ENCODE measurements at regions of chr19 and their contacts with region 1.

Region 1: DNA sequence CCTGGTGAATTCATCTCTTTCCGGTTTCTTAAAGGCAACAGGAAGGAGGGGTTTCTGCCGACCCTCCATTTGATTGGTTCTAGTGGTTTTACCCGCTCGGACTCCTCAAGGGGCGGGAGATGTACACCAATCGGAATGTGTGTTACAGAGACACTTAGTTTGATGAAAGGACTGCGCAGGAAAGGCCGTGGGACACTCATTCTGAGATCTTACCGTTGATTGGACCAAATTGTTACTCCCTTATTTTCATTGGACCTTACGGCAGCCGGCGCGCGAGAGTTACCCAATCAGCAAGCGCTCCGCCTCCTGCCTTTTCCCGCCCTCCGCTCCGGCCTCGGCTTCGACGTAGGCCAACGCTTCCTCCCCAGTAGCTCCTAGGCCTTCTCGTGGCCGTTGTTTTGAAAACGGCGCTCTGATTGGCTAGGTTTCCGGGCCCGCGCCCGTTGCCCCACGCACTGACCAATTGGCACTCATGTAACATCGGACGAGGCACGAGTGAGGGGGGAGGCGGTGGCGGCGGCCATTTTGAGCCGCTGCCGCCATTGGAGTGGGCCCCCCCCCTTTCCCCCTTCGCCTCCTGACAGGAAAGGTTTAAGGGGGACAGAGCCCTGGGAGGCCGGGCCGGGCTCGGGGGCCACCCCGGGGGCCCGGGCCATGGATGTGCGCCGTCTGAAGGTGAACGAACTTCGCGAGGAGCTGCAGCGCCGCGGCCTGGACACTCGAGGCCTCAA is at the start of gene HNRNPUL1:
- DNase-seq: peak; percentile 97 to 100
- ATAC-seq: peak; percentile 81 to 92 (median 89)
- H3K4me3 ChIP-seq: peak within 1 kb of the TSS; percentile 45 to 99 (median 91)
- H3K27ac ChIP-seq: peak within 1 kb of the TSS; percentile 92 to 100 (median 99)
- H3K4me1 ChIP-seq: peaks cover 15 to 38% (median 25%) of the 10 kb centered on the region in 9 donors
- H3K27me3 ChIP-seq: no peaks in the 10 kb centered on the region
- CTCF ChIP-seq: peak in 6 of 9 donors; percentile 12 to 58 (median 38)
- total RNA-seq, gene HNRNPUL1: 101 to 151 (median 108) TPM

Region 2: GRCh38 chr19:40974633-40975037 is 289.4 kb before region 1 on chr19:
- intact Hi-C with region 1: loop called in 1 of 10 experiments (anchors 10 kb)
- DNase-seq: peak; percentile 39 to 54
- ATAC-seq: peak in 3 of 8 donors; percentile 51 to 75 (median 66)
- H3K4me3 ChIP-seq: no peak overlapping the region
- H3K27ac ChIP-seq: no peak overlapping the region
- H3K4me1 ChIP-seq: no peaks in the 10 kb centered on the region
- H3K27me3 ChIP-seq: peaks cover 0 to 46% (median 13%) of the 10 kb centered on the region in 7 donors
- CTCF ChIP-seq: peak; percentile 65 to 91 (median 83)

Region 3: DNA sequence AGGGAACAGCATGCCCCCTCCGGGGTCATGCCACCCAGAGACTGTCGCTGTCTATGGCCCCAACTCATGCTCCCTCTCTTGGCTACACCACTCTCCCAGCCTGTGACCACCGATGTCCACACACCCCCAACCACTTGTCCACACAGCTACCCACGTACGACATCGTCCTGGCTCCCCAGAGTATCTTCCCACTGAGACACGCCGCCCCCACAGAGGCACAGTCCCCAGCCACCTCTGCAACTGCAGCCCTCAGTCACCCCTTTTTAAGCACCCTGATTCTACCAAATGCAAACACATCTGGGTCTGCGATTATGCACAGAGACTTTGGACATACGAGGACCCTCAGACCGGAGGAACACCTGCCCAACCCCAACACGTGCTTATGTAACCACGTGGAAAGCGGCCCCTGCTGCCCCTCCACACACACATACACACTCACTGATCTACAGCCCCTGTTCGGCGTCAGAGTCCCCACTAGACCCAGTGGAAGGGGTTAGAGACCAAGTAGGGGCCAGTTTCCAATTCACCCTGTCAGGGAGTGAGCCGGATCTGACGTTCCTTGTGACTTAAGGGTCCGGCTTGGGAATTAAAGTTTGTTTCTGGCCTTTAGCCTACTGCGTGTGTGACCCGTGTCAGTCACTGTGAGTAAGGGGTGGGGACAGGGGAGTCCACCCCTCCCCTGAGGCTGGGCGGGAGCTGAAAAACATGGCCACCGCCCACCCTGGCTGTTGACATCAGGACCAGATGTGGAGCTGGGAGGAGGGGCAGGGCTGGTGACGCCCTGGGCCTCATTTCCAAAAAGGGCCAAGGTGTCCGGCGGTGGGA is 56.9 kb before region 1 on chr19:
- intact Hi-C with region 1: loop called in 9 of 10 experiments (anchors 1 to 5 kb)
- DNase-seq: peak; percentile 84
- ATAC-seq: peak; percentile 75 to 92 (median 90)
- H3K4me3 ChIP-seq: peak overlapping the region in 5 of 10 donors; percentile 5 to 27 (median 19)
- H3K27ac ChIP-seq: peak overlapping the region; percentile 51 to 76 (median 70)
- H3K4me1 ChIP-seq: peaks cover 0 to 19% (median 0%) of the 10 kb centered on the region in 9 donors
- H3K27me3 ChIP-seq: no peaks in the 10 kb centered on the region
- CTCF ChIP-seq: no peak

Region 4: DNA sequence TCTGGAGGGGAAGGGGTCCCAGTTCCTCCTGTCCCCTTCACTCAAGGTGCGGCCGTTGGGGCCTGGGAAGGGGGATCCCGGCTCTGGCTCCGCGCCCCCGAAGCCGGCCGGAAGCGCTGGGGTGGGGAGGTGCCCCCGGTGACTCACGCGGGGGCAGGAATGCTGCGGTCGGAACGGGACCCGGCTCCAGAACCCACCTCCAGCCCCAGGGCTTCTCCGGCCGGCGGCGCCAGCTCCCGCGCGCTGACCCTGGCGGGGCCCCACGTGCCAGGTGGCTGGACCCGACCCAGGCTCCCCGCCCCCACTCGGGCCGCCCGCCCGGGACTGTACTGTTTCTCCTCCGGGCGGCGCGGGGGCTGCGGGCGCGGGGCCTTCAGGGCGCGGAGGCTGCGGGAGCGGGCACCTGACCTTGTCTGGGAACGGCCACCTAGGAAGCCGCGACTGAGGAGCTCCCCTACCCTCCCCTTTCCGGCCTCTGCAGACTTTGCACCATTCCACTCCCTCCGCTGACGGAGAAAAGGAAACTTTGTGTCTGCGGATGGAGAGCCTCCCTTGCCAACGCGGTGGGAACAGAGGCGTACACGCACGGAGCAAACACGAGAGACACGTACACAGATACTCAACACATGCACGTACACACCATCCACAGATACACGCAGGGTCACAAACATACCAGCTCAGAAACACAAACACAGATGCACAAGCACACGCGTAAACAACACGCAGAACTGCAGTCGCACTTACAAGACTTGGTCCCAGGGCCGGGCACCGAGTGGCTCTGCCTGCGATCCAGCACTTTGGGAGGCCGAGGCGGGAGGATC is 37.8 kb before region 1 on chr19:
- intact Hi-C with region 1: loop called in 3 of 10 experiments (anchors 5 kb)
- DNase-seq: peak; percentile 61 to 76
- ATAC-seq: peak; percentile 50 to 89 (median 74)
- H3K4me3 ChIP-seq: peak overlapping the region; percentile 27 to 61 (median 52)
- H3K27ac ChIP-seq: peak overlapping the region; percentile 61 to 87 (median 78)
- H3K4me1 ChIP-seq: peaks cover 5 to 26% (median 15%) of the 10 kb centered on the region in 9 donors
- H3K27me3 ChIP-seq: peaks cover 0 to 39% (median 0%) of the 10 kb centered on the region in 7 donors
- CTCF ChIP-seq: no peak

Region 5: DNA sequence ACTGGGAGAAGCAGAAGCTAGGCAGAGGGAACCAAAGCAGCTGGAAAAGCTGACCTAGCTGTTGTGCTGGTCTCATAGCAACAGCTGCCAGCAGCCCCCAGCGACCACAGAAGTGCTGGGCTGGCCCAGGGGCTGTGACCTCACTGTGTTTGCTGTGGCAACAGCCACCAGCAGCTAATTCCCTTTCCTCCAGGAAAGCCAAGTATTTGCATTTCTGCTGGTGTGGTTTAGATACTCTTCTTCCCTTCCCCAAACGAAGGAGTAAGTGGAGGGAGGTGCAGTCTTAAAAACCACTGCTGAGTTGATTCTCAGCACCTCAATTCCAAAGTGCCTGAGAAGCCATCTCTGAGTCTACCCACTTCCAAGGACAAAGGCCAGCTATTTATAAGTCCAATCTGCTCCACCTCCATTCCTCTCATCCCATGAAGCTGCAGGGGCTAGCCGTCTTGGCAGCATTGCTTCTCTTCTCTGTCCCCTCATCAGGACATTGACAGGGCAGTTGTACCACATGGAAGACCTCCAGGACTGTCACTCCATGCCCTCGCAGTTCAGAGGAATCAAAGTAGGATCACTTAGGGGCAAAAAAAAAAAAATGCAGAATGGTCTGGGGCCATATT is 34.4 kb after region 1 on chr19:
- intact Hi-C with region 1: loop called in 4 of 10 experiments (anchors 1 to 5 kb)
- DNase-seq: peak; percentile 81 to 88
- ATAC-seq: peak; percentile 77 to 90 (median 86)
- H3K4me3 ChIP-seq: no peak overlapping the region
- H3K27ac ChIP-seq: peak overlapping the region; percentile 80 to 93 (median 89)
- H3K4me1 ChIP-seq: peaks cover 16 to 78% (median 58%) of the 10 kb centered on the region in 9 donors
- H3K27me3 ChIP-seq: no peaks in the 10 kb centered on the region
- CTCF ChIP-seq: no peak

Region 6: DNA sequence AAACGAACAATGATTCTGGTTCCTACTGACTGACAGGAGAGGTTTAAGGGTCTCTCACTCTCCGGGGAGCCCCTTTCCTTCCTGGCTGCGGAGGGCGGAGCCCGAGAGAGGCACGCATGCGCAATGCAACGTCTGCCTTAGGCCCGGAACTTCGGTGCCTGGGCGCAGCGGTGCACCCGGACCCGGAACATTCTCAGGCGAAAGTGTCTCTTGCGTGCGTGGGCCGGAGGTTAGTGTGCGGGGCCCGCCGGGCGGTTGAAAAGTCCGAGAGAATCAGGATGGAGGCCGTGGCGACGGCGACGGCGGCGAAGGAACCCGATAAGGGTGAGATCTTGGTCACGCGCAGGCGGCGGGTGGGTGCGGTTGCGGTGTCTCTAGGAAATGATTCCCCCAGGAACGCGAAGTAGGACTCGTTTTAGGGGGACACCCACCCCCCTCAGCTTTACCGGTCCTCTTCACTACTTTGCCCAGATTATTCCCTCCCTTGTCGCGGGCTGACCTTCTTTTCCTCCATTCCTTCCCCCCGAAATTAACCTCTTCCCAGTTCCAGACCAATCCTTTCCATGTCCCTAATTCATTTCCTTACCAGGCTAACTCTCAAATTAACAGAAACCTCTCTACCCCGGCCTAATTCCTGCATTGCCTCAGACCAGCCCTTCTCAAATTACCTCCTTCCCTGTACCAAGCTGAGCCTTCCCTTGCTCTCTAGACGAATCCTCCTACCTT is 46.2 kb after region 1 on chr19 and contains the start of gene CCDC97:
- intact Hi-C with region 1: loop called in 7 of 10 experiments (anchors 1 to 5 kb)
- DNase-seq: peak; percentile 88 to 89
- ATAC-seq: peak; percentile 82 to 93 (median 87)
- H3K4me3 ChIP-seq: peak within 1 kb of the TSS; percentile 15 to 84 (median 70)
- H3K27ac ChIP-seq: peak within 1 kb of the TSS; percentile 89 to 99 (median 94)
- H3K4me1 ChIP-seq: peaks cover 6 to 64% (median 39%) of the 10 kb centered on the region in 9 donors
- H3K27me3 ChIP-seq: no peaks in the 10 kb centered on the region
- CTCF ChIP-seq: peak in 2 of 9 donors; percentile 8 to 14
- total RNA-seq, gene CCDC97: 12.6 to 19.2 (median 16.4) TPM

Region 7: GRCh38 chr19:41363753-41364523 is 99.9 kb after region 1 on chr19 and contains the start of gene B9D2:
- intact Hi-C with region 1: loop called in 1 of 10 experiments (anchors 5 kb)
- DNase-seq: peak; percentile 96 to 99
- ATAC-seq: peak; percentile 96 to 98 (median 98)
- H3K4me3 ChIP-seq: peak within 1 kb of the TSS; percentile 20 to 89 (median 71)
- H3K27ac ChIP-seq: peak within 1 kb of the TSS; percentile 75 to 99 (median 97)
- H3K4me1 ChIP-seq: peaks cover 2 to 59% (median 15%) of the 10 kb centered on the region in 9 donors
- H3K27me3 ChIP-seq: no peaks in the 10 kb centered on the region
- CTCF ChIP-seq: no peak
- total RNA-seq, gene B9D2: 1.00 to 5.8 (median 2.3) TPM

Measured in heart right ventricle (tissue), 16 donors.